ENCODE measurements at regions of chr14 and their contacts with region 1.

Region 1: GRCh38 chr14:91911474-91912032 is 35.9 kb downstream of the FBLN5 start:
- DNase-seq: peak in 4 of 5 donors; percentile 60 to 71 (median 64)
- H3K4me3 ChIP-seq: no peak overlapping the region
- H3K4me3 Mint-ChIP-seq: peak overlapping the region in 2 of 8 donors; percentile 20 to 29
- H3K27ac ChIP-seq: no peak overlapping the region
- H3K27ac Mint-ChIP-seq: peak overlapping the region in 4 of 7 donors; percentile 70 to 82 (median 82)
- H3K4me1 ChIP-seq: peaks cover 8% of the 10 kb centered on the region
- H3K4me1 Mint-ChIP-seq: peaks cover 11 to 13% (median 11%) of the 10 kb centered on the region in 4 donors
- H3K27me3 ChIP-seq: no peaks in the 10 kb centered on the region
- H3K27me3 Mint-ChIP-seq: peaks cover 1 to 5% of the 10 kb centered on the region in 2 donors

Region 2: DNA sequence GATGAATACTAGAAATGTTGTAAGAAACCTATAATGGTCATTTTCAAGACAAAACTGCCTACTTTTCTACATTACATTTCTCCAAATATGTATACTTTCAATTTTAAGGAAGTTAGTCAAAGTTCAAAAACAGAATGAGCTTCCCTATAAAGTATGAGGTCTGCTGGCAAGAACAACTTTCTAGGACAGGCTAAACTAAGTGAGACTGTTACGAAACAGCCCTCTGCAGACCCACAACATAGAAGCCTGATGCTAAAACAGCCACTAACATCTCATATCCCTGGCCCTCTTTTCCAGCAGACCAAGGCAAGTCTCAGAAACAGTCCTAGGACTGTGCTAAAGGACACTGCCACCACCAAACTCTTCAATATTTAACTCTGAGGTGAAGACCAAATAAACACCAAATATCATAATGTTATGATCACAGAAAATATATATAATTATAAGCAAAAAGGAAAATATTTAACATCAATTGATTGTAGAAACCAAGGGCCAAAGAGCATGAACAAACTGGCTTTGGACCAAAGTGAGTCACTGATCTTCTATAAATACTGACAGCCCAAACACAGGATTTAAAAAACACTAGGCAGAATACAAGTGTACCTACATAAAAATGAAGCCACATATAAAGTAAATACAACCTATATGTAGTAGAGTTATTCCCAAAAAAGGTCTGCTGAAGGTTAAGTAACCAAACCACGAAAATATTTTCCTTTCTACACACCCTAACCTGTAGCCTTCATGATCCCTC is 429.1 kb before region 1 on chr14:
- CTCF ChIA-PET with region 1: interaction called, 3 read pairs
- POLR2A ChIA-PET with region 1: no interaction called
- intact Hi-C with region 1: loop called (anchors 2 kb)
- DNase-seq: no peak
- H3K4me3 ChIP-seq: no peak overlapping the region
- H3K4me3 Mint-ChIP-seq: no peak overlapping the region
- H3K27ac ChIP-seq: no peak overlapping the region
- H3K27ac Mint-ChIP-seq: peak overlapping the region in 4 of 7 donors; percentile 24 to 57 (median 40)
- H3K4me1 ChIP-seq: peaks cover 34% of the 10 kb centered on the region
- H3K4me1 Mint-ChIP-seq: peaks cover 42 to 84% (median 56%) of the 10 kb centered on the region in 4 donors
- H3K27me3 ChIP-seq: no peaks in the 10 kb centered on the region
- H3K27me3 Mint-ChIP-seq: no peaks in the 10 kb centered on the region

Region 3: GRCh38 chr14:91786188-91786587 is 125.4 kb before region 1 on chr14:
- CTCF ChIA-PET with region 1: interaction called, 33 read pairs
- POLR2A ChIA-PET with region 1: interaction called, 4 read pairs
- intact Hi-C with region 1: loop called (anchors 5 kb)
- DNase-seq: no peak
- H3K4me3 ChIP-seq: no peak overlapping the region
- H3K4me3 Mint-ChIP-seq: no peak overlapping the region
- H3K27ac ChIP-seq: no peak overlapping the region
- H3K27ac Mint-ChIP-seq: peak overlapping the region in 3 of 7 donors; percentile 43 to 48 (median 46)
- H3K4me1 ChIP-seq: no peaks in the 10 kb centered on the region
- H3K4me1 Mint-ChIP-seq: peaks cover 4 to 10% (median 8%) of the 10 kb centered on the region in 4 donors
- H3K27me3 ChIP-seq: no peaks in the 10 kb centered on the region
- H3K27me3 Mint-ChIP-seq: no peaks in the 10 kb centered on the region

Region 4: DNA sequence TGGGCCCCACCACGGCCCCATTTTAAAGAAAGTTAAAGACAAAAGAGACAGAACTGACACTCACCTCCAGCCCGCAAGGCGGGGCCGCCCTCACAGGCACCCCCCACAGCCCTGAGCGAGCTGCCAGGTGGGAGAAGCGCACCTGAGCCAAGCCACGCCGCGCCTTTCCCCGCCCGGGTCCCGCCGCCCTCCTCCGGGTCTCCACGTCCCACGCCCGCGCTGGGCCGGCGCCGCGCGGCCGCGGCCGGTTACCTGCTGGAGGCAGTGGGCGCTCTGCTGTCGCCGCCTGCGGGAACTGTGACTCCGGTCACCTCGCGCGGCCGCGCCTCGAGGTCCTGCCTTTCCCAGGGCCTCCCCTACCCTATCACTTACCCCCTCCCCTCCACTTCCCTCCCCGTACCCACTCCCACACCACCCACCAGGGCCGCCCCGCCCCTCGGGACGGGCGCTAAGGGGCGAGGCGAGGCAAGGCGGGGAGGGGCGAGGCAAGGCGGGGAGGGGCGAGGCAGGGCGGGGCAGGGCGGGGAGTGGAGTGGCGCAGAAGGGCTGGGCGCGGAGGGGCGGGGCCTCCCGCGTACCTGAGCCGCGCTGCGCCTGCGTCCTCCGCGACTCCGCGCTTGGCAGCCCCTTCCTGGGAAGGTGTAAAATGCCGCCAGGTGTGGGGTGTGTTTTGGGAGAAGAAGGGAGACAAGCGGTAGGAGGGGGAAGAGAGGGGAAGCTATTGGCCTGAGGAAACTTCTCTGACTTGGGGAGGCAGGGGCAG is 75.3 kb before region 1 on chr14:
- CTCF ChIA-PET with region 1: interaction called, 17 read pairs
- POLR2A ChIA-PET with region 1: interaction called, 18 read pairs
- intact Hi-C with region 1: no loop called
- DNase-seq: peak; percentile 80 to 90 (median 83)
- H3K4me3 ChIP-seq: peak overlapping the region; percentile 34 to 63
- H3K4me3 Mint-ChIP-seq: peak overlapping the region; percentile 84 to 92 (median 88)
- H3K27ac ChIP-seq: peak overlapping the region; percentile 68
- H3K27ac Mint-ChIP-seq: peak overlapping the region; percentile 81 to 95 (median 91)
- H3K4me1 ChIP-seq: peaks cover 72% of the 10 kb centered on the region
- H3K4me1 Mint-ChIP-seq: peaks cover 64 to 94% (median 77%) of the 10 kb centered on the region in 4 donors
- H3K27me3 ChIP-seq: no peaks in the 10 kb centered on the region
- H3K27me3 Mint-ChIP-seq: no peaks in the 10 kb centered on the region

Region 5: DNA sequence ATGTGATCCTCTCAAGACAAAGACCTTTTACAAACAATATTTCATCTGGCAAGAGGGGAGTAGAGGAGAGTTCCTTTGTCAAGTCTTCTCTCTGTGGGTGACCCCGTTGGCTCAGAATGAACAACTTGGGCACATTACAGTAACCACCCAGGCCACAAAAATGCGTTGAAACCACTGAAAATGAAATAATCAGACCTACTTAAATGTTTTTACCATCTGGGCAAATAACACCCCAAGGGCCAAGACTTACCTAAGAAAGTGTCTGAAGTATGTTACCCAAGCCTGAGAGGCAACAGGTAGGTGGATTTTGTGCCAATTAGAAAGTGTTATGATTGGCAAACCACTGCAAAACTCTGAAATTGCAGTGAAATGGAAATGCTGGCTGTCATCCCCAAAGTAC is 45.5 kb before region 1 on chr14:
- CTCF ChIA-PET with region 1: interaction called, 28 read pairs
- POLR2A ChIA-PET with region 1: interaction called, 27 read pairs
- intact Hi-C with region 1: loop called (anchors 2 kb)
- DNase-seq: peak in 3 of 5 donors; percentile 33 to 46 (median 38)
- H3K4me3 ChIP-seq: peak overlapping the region; percentile 76 to 93
- H3K4me3 Mint-ChIP-seq: peak overlapping the region; percentile 97 to 100 (median 99)
- H3K27ac ChIP-seq: peak overlapping the region; percentile 79
- H3K27ac Mint-ChIP-seq: peak overlapping the region; percentile 94 to 100 (median 97)
- H3K4me1 ChIP-seq: peaks cover 79% of the 10 kb centered on the region
- H3K4me1 Mint-ChIP-seq: peaks cover 50 to 96% (median 68%) of the 10 kb centered on the region in 4 donors
- H3K27me3 ChIP-seq: no peaks in the 10 kb centered on the region
- H3K27me3 Mint-ChIP-seq: no peaks in the 10 kb centered on the region

Region 6: DNA sequence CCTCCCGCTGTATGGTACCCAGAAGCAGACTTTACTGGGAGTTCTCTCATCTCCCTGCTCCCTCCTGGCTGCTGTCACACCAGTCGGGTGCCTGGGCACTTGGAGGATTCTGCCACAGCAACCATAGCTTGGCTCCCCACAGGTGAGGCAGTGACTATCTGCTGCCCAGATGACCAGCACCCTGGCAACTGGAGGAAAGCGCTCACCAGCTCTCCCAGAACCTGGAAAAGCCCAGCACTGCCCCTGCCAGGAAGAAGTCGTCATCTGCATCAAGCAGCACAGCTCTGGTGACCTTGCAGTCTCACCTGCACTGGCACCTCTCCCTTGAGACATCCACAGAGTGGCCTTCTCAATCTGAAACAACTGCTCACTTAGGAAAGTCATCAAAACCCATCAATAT is 12.3 kb before region 1 on chr14:
- CTCF ChIA-PET with region 1: interaction called, 39 read pairs
- POLR2A ChIA-PET with region 1: interaction called, 3 read pairs
- intact Hi-C with region 1: no loop called
- DNase-seq: no peak
- H3K4me3 ChIP-seq: no peak overlapping the region
- H3K4me3 Mint-ChIP-seq: no peak overlapping the region
- H3K27ac ChIP-seq: no peak overlapping the region
- H3K27ac Mint-ChIP-seq: peak overlapping the region in 1 of 7 donors; percentile 25
- H3K4me1 ChIP-seq: peaks cover under 1% of the 10 kb centered on the region
- H3K4me1 Mint-ChIP-seq: peaks cover 0 to 13% (median 6%) of the 10 kb centered on the region in 4 donors
- H3K27me3 ChIP-seq: no peaks in the 10 kb centered on the region
- H3K27me3 Mint-ChIP-seq: no peaks in the 10 kb centered on the region

Region 7: GRCh38 chr14:91983588-91983987 is 72.0 kb after region 1 on chr14:
- CTCF ChIA-PET with region 1: no interaction called
- POLR2A ChIA-PET with region 1: no interaction called
- intact Hi-C with region 1: no loop called
- DNase-seq: no peak
- H3K4me3 ChIP-seq: no peak overlapping the region
- H3K4me3 Mint-ChIP-seq: no peak overlapping the region
- H3K27ac ChIP-seq: no peak overlapping the region
- H3K27ac Mint-ChIP-seq: no peak overlapping the region
- H3K4me1 ChIP-seq: no peaks in the 10 kb centered on the region
- H3K4me1 Mint-ChIP-seq: peaks cover 0 to 14% (median 6%) of the 10 kb centered on the region in 4 donors
- H3K27me3 ChIP-seq: no peaks in the 10 kb centered on the region
- H3K27me3 Mint-ChIP-seq: no peaks in the 10 kb centered on the region